CD4-positive, alpha-beta T cell (primary cell): ENCODE measurements at regions of chrX and their contacts with region 1.

Region 1: DNA sequence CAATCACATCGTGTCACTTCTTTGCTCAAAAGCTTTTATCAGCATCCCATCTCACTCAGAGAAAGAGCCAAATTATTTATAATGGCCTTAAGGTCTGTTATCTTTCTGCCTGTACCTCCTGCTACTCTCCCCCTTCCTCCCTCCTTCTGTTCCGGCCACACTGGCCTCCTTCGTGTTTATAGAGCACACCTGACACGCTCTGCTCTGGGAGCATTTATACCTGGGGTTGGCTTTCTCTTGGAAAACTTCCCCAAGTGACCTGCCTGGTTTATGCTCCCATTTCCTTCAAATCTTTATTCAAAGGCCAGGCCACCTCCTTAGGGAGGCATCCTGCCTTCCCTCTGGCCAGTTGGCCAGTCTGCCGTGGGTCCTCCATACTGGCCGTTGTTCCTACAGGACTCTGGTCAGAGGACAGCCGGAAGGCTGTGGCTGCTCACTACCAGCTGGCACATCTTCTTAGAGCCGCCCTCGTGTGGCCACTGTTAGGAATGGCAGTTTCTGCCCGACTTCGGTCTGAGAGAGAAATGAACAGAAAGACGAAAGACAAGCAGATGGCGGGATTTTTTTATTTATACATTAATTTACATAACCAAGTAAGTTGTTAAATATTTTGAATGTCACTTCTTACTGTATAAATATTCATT is 80.2 kb upstream of the CBLL2 start:
- DNase-seq: peak; percentile 1 to 63 (median 38)
- ATAC-seq: no peak
- H3K4me3 ChIP-seq: no peak overlapping the region
- H3K4me3 Mint-ChIP-seq: no peak overlapping the region
- H3K27ac ChIP-seq: no peak overlapping the region
- H3K27ac Mint-ChIP-seq: no peak overlapping the region
- H3K4me1 ChIP-seq: peaks cover 3% of the 10 kb centered on the region
- H3K4me1 Mint-ChIP-seq: no peaks in the 10 kb centered on the region
- H3K27me3 ChIP-seq: no peaks in the 10 kb centered on the region
- H3K27me3 Mint-ChIP-seq: no peaks in the 10 kb centered on the region
- CTCF ChIP-seq: peak; percentile 62

Region 2: DNA sequence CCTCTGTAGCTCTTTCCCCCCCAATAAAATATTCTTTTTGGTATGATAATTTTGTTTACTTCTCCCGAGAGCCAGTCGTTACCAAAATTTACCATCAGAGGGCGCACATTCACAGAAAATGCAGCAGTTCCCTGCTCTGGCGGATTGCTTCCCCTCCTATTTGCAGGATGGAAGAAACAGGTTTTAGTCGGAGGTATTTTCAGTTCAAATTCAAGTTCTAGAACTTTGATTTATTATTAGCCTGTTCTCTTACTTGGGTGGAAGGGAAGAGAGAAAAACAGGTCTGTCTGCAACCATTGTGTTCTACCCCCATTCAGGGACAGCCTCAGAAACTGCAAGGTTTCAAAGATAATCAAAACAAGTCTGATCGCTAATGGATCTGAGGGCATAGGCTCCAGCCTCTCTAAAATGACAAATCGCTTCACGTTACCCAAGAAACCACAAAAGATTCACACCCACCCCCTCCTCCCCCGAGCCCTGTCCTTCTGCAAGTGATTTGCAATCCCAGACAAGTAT is 1662.1 kb before region 1 on chrX:
- CTCF ChIA-PET with region 1: no interaction called
- POLR2A ChIA-PET with region 1: no interaction called
- intact Hi-C with region 1: loop called (anchors 5 kb)
- DNase-seq: peak; percentile 18 to 70 (median 42)
- ATAC-seq: no peak
- H3K4me3 ChIP-seq: no peak overlapping the region
- H3K4me3 Mint-ChIP-seq: no peak overlapping the region
- H3K27ac ChIP-seq: no peak overlapping the region
- H3K27ac Mint-ChIP-seq: no peak overlapping the region
- H3K4me1 ChIP-seq: no peaks in the 10 kb centered on the region
- H3K4me1 Mint-ChIP-seq: peaks cover 6% of the 10 kb centered on the region
- H3K27me3 ChIP-seq: peaks cover 8 to 10% of the 10 kb centered on the region in 2 experiments
- H3K27me3 Mint-ChIP-seq: peaks cover 53% of the 10 kb centered on the region
- CTCF ChIP-seq: peak; percentile 59

Region 3: DNA sequence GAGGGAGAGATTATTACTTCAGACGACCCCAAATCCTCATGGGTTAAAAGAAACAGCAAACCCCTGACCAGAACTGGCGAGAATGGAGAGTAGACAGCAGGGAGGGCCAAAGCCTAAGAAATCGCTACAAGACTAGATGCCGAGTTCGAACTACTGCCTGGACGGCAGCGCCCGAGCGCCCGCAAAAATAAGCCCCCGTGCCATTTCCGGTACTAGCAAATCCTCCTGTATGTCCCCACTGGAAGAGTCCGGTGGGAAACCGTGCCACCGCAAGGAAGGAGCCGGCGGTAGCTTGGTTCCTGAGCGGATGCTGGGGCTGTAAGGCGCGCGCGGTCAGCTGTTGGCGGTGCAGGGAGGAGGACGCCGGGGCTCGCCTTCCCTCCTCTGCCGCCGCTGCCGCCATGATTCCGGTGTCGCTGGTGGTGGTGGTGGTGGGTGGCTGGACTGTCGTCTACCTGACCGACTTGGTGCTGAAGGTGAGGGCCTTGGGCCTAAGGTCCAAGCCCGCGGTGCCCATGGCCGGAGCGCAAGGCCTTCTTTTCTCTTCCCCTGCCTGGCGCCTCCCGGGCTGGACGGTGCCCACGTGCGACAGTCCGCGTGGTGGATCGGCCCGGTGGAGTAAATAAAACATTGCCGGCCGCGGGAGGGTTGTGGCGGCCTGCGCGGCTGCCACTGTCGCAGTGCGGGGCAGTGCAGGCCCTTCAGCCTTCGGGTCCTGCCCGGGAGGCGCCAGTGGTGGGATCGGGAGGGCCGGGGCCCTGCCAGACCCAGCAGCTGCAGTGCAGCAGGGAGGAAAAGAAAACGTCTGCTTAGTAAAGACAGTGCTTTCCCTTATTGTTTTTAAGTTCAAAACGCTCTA is 353.0 kb before region 1 on chrX and contains the start of gene MBTPS2:
- CTCF ChIA-PET with region 1: no interaction called
- POLR2A ChIA-PET with region 1: no interaction called
- intact Hi-C with region 1: loop called in 1 of 2 experiments (anchors 10 kb)
- DNase-seq: peak; percentile 69 to 90 (median 76)
- ATAC-seq: peak; percentile 93
- H3K4me3 ChIP-seq: peak within 1 kb of the TSS; percentile 86
- H3K4me3 Mint-ChIP-seq: peak within 1 kb of the TSS; percentile 96
- H3K27ac ChIP-seq: peak within 1 kb of the TSS in 1 of 2 donors; percentile 55
- H3K27ac Mint-ChIP-seq: peak within 1 kb of the TSS; percentile 93
- H3K4me1 ChIP-seq: peaks cover 12% of the 10 kb centered on the region
- H3K4me1 Mint-ChIP-seq: peaks cover 14% of the 10 kb centered on the region
- H3K27me3 ChIP-seq: no peaks in the 10 kb centered on the region
- H3K27me3 Mint-ChIP-seq: no peaks in the 10 kb centered on the region
- CTCF ChIP-seq: no peak
- total RNA-seq, gene MBTPS2: 3.1 to 3.4 TPM

Region 4: GRCh38 chrX:21996872-21997271 is 195.7 kb before region 1 on chrX:
- CTCF ChIA-PET with region 1: no interaction called
- POLR2A ChIA-PET with region 1: no interaction called
- intact Hi-C with region 1: loop called in 1 of 2 experiments (anchors 5 kb)
- DNase-seq: peak in 2 of 14 experiments; percentile 23 to 36
- ATAC-seq: no peak
- H3K4me3 ChIP-seq: no peak overlapping the region
- H3K4me3 Mint-ChIP-seq: no peak overlapping the region
- H3K27ac ChIP-seq: no peak overlapping the region
- H3K27ac Mint-ChIP-seq: peak overlapping the region; percentile 9
- H3K4me1 ChIP-seq: no peaks in the 10 kb centered on the region
- H3K4me1 Mint-ChIP-seq: peaks cover 4% of the 10 kb centered on the region
- H3K27me3 ChIP-seq: no peaks in the 10 kb centered on the region
- H3K27me3 Mint-ChIP-seq: no peaks in the 10 kb centered on the region
- CTCF ChIP-seq: no peak

Region 5: GRCh38 chrX:22135994-22136684 is 56.4 kb before region 1 on chrX:
- CTCF ChIA-PET with region 1: no interaction called
- POLR2A ChIA-PET with region 1: no interaction called
- intact Hi-C with region 1: loop called (anchors 2 to 10 kb)
- DNase-seq: peak in 6 of 14 experiments; percentile 1 to 58 (median 38)
- ATAC-seq: peak; percentile 44
- H3K4me3 ChIP-seq: no peak overlapping the region
- H3K4me3 Mint-ChIP-seq: peak overlapping the region; percentile 71
- H3K27ac ChIP-seq: no peak overlapping the region
- H3K27ac Mint-ChIP-seq: no peak overlapping the region
- H3K4me1 ChIP-seq: peaks cover 3% of the 10 kb centered on the region
- H3K4me1 Mint-ChIP-seq: peaks cover 10% of the 10 kb centered on the region
- H3K27me3 ChIP-seq: no peaks in the 10 kb centered on the region
- H3K27me3 Mint-ChIP-seq: no peaks in the 10 kb centered on the region
- CTCF ChIP-seq: peak; percentile 62

Region 6: GRCh38 chrX:22159071-22159799 is 33.3 kb before region 1 on chrX:
- CTCF ChIA-PET with region 1: no interaction called
- POLR2A ChIA-PET with region 1: no interaction called
- intact Hi-C with region 1: no loop called
- DNase-seq: no peak
- ATAC-seq: no peak
- H3K4me3 ChIP-seq: no peak overlapping the region
- H3K4me3 Mint-ChIP-seq: no peak overlapping the region
- H3K27ac ChIP-seq: no peak overlapping the region
- H3K27ac Mint-ChIP-seq: no peak overlapping the region
- H3K4me1 ChIP-seq: no peaks in the 10 kb centered on the region
- H3K4me1 Mint-ChIP-seq: no peaks in the 10 kb centered on the region
- H3K27me3 ChIP-seq: no peaks in the 10 kb centered on the region
- H3K27me3 Mint-ChIP-seq: no peaks in the 10 kb centered on the region
- CTCF ChIP-seq: no peak